Naive thymus-derived CD4-positive, alpha-beta T cell (primary cell): ENCODE measurements at regions of chr17 and their contacts with region 1.

Region 1: DNA sequence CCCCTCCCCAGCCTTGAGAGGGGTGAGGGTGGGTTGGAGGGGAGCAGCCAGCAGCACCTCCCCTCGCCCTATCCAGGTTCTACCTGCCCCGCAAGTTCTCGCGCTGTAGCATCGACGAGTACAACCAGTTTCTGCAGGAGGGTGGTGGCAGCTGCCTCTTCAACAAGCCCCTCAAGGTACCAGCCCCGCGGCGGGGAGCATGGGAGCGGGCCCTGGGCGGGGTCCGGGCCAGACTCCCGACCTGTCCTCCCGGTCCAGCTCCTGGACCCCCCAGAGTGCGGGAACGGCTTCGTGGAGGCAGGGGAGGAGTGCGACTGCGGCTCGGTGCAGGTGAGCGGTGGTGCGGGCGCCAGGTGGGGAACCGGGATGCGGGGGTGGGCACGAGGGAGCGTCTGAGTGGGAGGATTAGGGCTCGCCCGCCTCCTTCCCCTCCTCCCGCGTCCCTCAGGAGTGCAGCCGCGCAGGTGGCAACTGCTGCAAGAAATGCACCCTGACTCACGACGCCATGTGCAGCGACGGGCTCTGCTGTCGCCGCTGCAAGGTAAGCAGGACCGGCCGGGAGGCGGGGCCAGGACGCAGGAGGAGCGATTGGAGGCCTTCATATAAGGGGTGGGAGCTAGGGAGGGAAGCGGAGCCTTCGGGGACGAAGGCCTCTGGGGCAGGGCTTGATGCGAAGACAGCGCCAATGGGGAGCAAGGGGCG is 16.5 kb downstream of the ADAM11 start:
- DNase-seq: peak in 8 of 9 donors; percentile 83 to 95 (median 94)
- ATAC-seq: peak; percentile 96
- H3K4me3 ChIP-seq: peak overlapping the region; percentile 87
- H3K4me3 Mint-ChIP-seq: peak overlapping the region; percentile 88 to 93 (median 90)
- H3K27ac ChIP-seq: peak overlapping the region; percentile 76
- H3K27ac Mint-ChIP-seq: peak overlapping the region in 7 of 9 donors; percentile 58 to 80 (median 73)
- H3K4me1 ChIP-seq: peaks cover 0 to 11% of the 10 kb centered on the region in 2 donors
- H3K4me1 Mint-ChIP-seq: peaks cover 0 to 14% (median 9%) of the 10 kb centered on the region in 7 donors
- H3K27me3 ChIP-seq: no peaks in the 10 kb centered on the region
- H3K27me3 Mint-ChIP-seq: peaks cover 0 to 10% (median 5%) of the 10 kb centered on the region in 5 donors

Region 2: DNA sequence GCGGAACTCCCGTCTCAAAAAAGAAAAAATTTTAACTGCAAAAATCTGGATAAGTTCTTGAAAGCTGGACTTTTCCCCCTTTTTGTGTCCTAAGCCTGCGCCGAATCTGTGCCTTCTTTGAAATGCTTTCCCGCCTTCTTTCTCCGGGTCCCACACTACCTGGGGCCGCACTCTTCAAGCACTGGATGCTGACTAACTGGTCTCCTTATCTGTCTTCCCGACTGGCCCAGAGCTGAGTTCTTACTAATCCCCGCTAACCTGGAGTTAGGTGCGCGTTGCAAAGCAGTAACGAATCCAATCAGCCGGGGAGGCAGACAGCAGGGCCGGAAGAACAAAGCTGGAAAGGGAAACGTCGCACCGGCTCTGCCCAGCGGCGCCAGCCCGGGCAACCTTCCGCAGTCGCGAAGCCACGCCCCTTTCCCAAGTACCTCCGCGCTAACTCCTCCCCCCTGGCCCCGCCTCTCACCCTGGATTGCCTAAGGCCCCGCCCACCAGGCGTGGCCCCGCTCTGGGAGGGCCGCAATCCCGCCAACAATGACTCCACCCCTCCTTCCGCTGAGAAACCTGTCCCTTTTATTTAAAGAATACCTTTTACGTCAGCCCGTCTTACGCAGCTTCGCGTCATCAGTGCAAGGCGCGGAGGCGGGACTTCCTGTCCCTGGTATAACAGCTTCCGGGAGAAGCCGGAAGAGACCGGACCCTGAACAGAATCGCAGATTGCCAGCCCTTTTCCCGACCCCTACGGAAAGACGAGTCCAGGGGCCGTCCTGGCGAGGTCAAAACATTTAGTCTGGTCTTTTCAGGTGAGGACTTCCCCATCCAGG is 588.8 kb before region 1 on chr17 and contains the start of gene TMUB2:
- CTCF ChIA-PET with region 1: no interaction called
- POLR2A ChIA-PET with region 1: no interaction called
- intact Hi-C with region 1: loop called in 1 of 2 experiments (anchors 1 kb)
- DNase-seq: peak; percentile 99 to 100 (median 100)
- ATAC-seq: peak; percentile 99
- H3K4me3 ChIP-seq: peak within 1 kb of the TSS; percentile 100
- H3K4me3 Mint-ChIP-seq: peak within 1 kb of the TSS; percentile 94 to 100 (median 98)
- H3K27ac ChIP-seq: peak within 1 kb of the TSS; percentile 99
- H3K27ac Mint-ChIP-seq: peak within 1 kb of the TSS; percentile 97 to 100 (median 100)
- H3K4me1 ChIP-seq: peaks cover 23 to 35% of the 10 kb centered on the region in 2 donors
- H3K4me1 Mint-ChIP-seq: peaks cover 41 to 68% (median 51%) of the 10 kb centered on the region in 7 donors
- H3K27me3 ChIP-seq: no peaks in the 10 kb centered on the region
- H3K27me3 Mint-ChIP-seq: no peaks in the 10 kb centered on the region
- total RNA-seq, gene TMUB2: 34.9 to 56.0 (median 41.6) TPM

Region 3: DNA sequence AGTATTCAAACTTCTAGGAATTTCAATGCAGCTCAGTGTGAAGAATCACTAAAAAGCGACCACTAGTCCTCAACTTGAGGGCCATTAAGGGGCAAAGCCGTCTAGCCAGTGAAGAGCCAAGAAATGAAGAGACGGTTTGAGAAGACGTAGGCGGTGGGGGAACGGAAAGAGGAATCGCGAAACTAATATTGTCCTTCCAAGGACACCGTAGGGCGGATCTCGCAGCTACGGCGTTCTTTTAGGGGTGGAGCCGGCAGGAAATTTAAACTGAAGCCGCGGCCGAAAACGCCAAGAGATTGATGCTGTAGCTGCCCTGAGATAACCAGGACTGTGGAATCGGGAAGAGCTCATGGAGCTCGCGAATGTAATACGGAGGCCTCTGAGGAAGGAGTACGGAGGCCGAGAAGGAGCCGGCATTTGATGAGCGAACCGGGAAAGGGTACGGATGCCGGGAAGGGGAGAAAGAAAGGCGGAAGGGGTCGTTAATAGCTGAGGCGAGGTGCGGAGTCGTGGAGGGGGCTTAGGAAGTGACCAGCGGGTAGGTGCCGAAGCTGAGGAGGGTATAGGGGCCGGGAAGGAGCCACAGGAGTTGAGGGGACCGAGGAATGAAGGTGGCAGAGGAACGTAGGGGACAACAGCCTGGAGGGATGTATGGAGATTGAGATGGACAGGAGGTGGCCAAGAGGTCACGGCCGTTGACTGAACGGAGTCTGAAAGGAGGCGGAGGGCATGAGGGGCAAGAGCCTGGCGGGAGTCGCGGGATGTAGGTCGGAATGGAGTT is 66.7 kb before region 1 on chr17 and contains the start of gene DBF4B:
- CTCF ChIA-PET with region 1: interaction called, 6 read pairs
- POLR2A ChIA-PET with region 1: no interaction called
- intact Hi-C with region 1: loop called in 1 of 2 experiments (anchors 2 kb)
- DNase-seq: peak; percentile 49 to 92 (median 86)
- ATAC-seq: peak; percentile 99
- H3K4me3 ChIP-seq: peak within 1 kb of the TSS; percentile 91
- H3K4me3 Mint-ChIP-seq: peak within 1 kb of the TSS in 1 of 10 donors; percentile 79
- H3K27ac ChIP-seq: peak within 1 kb of the TSS; percentile 62
- H3K27ac Mint-ChIP-seq: peak within 1 kb of the TSS in 1 of 9 donors; percentile 72
- H3K4me1 ChIP-seq: peaks cover 14 to 15% of the 10 kb centered on the region in 2 donors
- H3K4me1 Mint-ChIP-seq: peaks cover 0 to 7% (median 4%) of the 10 kb centered on the region in 7 donors
- H3K27me3 ChIP-seq: no peaks in the 10 kb centered on the region
- H3K27me3 Mint-ChIP-seq: peaks cover 0 to 9% (median 4%) of the 10 kb centered on the region in 5 donors
- total RNA-seq, gene DBF4B: 2.8 to 23.1 (median 7.8) TPM

Region 4: DNA sequence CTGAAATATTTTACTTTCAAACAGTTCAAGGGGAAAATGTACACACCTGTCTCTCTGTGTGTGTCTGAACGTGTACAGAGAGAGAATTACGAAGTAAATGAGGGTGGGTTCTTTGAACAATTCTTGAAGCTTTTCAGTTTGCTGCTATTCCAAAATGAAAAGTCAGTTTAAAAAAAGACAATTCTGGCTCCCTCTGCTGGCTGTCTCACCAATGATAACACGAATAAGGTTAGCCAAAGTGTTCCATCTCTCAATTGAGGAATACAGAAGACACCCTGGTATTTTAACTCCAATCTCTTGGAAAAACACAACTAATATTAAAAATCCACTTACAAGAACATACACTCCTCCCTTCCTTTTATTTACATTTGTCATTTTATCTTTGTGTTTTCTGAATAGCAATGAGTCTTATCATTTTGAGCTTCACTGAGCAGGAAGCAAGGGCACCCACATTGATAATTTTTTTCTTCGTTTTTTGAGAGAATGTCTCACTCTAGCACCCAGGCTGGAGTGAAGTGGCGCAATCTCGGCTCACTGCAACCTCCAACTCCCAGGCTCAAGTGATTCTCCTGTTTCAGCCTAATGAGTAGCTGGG is 103.4 kb after region 1 on chr17:
- CTCF ChIA-PET with region 1: interaction called, 5 read pairs
- POLR2A ChIA-PET with region 1: no interaction called
- intact Hi-C with region 1: loop called in 1 of 2 experiments (anchors 1 kb)
- DNase-seq: peak in 4 of 9 donors; percentile 17 to 28 (median 25)
- ATAC-seq: no peak
- H3K4me3 ChIP-seq: no peak overlapping the region
- H3K4me3 Mint-ChIP-seq: no peak overlapping the region
- H3K27ac ChIP-seq: no peak overlapping the region
- H3K27ac Mint-ChIP-seq: peak overlapping the region in 1 of 9 donors; percentile 5
- H3K4me1 ChIP-seq: no peaks in the 10 kb centered on the region
- H3K4me1 Mint-ChIP-seq: peaks cover 0 to 8% (median 3%) of the 10 kb centered on the region in 7 donors
- H3K27me3 ChIP-seq: no peaks in the 10 kb centered on the region
- H3K27me3 Mint-ChIP-seq: no peaks in the 10 kb centered on the region

Region 5: GRCh38 chr17:44968226-44969143 is 193.2 kb after region 1 on chr17 and contains the start of gene C1QL1:
- CTCF ChIA-PET with region 1: no interaction called
- POLR2A ChIA-PET with region 1: no interaction called
- intact Hi-C with region 1: loop called in 1 of 2 experiments (anchors 2 kb)
- DNase-seq: peak; percentile 58 to 93 (median 69)
- ATAC-seq: peak; percentile 99
- H3K4me3 ChIP-seq: peak within 1 kb of the TSS; percentile 33
- H3K4me3 Mint-ChIP-seq: peak within 1 kb of the TSS; percentile 64 to 87 (median 78)
- H3K27ac ChIP-seq: no peak within 1 kb of the TSS
- H3K27ac Mint-ChIP-seq: peak within 1 kb of the TSS in 2 of 9 donors; percentile 16 to 55
- H3K4me1 ChIP-seq: peaks cover 19 to 24% of the 10 kb centered on the region in 2 donors
- H3K4me1 Mint-ChIP-seq: peaks cover 23 to 40% (median 29%) of the 10 kb centered on the region in 7 donors
- H3K27me3 ChIP-seq: peaks cover 14 to 21% of the 10 kb centered on the region in 2 donors
- H3K27me3 Mint-ChIP-seq: peaks cover 30 to 84% (median 45%) of the 10 kb centered on the region in 5 donors
- total RNA-seq, gene C1QL1: 0.29 TPM in 1 of 5 experiments, not detected in the others

Region 6: GRCh38 chr17:45060797-45061605 is 285.7 kb after region 1 on chr17 and contains the start of gene NMT1:
- CTCF ChIA-PET with region 1: no interaction called
- POLR2A ChIA-PET with region 1: no interaction called
- intact Hi-C with region 1: loop called in 1 of 2 experiments (anchors 1 kb)
- DNase-seq: peak; percentile 81 to 98 (median 98)
- ATAC-seq: peak; percentile 95
- H3K4me3 ChIP-seq: peak within 1 kb of the TSS; percentile 97
- H3K4me3 Mint-ChIP-seq: peak within 1 kb of the TSS; percentile 80 to 100 (median 98)
- H3K27ac ChIP-seq: peak within 1 kb of the TSS; percentile 87
- H3K27ac Mint-ChIP-seq: peak within 1 kb of the TSS; percentile 88 to 99 (median 97)
- H3K4me1 ChIP-seq: peaks cover 18 to 20% of the 10 kb centered on the region in 2 donors
- H3K4me1 Mint-ChIP-seq: peaks cover 26 to 66% (median 53%) of the 10 kb centered on the region in 7 donors
- H3K27me3 ChIP-seq: no peaks in the 10 kb centered on the region
- H3K27me3 Mint-ChIP-seq: no peaks in the 10 kb centered on the region
- total RNA-seq, gene NMT1: 59.5 to 136 (median 121) TPM

Region 7: DNA sequence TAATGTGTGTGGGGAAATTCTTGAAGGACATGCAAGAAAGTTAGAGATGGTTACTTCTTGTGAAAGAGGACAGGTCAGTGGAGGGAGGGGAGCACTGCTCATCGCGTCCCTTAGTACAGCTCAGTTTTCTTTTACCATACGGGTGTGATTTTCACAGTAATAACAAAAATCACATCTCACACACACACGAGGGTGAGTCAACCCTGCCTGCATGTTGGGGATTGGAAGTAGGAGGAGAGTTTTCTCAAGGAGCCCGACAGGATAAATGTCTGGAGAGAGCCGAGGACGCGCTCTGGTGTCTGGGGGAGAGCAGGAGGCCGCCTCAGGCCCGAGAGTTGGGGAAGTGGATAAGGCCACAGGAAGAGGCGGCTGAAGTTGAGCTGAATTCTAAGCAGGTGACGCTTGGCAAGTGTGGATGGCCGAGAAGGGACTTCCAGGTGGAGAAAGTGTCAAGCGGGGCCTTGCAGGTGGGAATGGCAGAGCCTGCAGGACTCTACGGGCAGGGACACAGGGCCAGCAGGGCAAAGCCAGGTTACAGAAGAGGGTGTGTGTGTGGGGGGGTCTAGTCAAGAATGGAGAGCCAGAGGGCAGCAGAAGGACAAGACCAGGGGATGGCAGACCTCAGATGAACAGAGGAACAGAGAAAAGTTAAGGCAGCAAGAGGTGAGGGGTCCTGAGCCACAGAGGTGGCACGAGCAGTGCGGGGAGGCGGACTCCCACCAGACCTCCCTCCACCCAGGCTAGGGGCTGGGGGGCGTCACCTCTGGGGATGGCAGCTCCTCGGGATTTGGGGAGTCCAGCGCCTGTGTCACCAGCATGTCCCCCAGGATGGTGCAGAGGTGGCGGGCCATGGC is 340.8 kb after region 1 on chr17:
- CTCF ChIA-PET with region 1: no interaction called
- POLR2A ChIA-PET with region 1: no interaction called
- intact Hi-C with region 1: no loop called
- DNase-seq: no peak
- ATAC-seq: no peak
- H3K4me3 ChIP-seq: no peak overlapping the region
- H3K4me3 Mint-ChIP-seq: no peak overlapping the region
- H3K27ac ChIP-seq: no peak overlapping the region
- H3K27ac Mint-ChIP-seq: peak overlapping the region in 1 of 9 donors; percentile 60
- H3K4me1 ChIP-seq: no peaks in the 10 kb centered on the region
- H3K4me1 Mint-ChIP-seq: no peaks in the 10 kb centered on the region
- H3K27me3 ChIP-seq: no peaks in the 10 kb centered on the region
- H3K27me3 Mint-ChIP-seq: no peaks in the 10 kb centered on the region

Region 8: DNA sequence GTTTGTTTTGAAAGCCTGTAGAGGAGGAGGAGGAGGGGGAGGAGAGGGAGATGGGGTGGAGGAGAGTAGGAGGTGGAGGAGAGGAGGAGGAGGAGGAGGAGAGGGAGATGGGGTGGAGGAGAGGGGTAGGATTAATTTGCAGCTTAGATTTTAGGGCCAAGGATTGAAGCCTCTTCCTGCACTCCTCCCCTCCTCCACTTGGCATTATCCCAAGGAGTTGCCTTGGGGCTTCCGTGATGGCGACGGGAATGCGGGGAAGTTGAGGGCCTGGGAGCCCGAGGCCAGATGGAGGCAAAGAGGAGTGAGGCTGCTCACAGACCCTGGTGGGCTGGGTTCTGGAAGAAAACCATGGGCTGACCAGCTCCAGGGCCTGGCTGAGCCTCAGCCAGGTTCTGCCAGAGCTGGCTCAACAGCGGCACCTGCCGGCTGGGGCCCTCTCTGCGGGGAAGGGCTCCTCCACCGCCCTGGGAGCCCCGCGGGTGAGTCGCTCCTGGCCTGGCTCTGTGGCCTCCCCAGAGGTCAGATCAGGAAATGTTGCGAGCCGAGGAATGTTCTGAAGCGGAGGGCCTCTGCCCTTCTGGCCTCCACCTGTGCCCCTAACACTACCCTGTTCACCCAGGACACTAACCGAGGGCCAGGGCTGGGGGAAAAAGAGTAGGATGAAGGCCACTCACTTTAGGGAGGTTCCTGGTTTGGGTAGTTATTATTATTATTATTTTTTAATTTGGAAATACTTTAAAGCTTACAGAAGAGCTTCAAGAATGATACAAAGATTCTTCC is 422.5 kb after region 1 on chr17:
- CTCF ChIA-PET with region 1: interaction called, 4 read pairs
- POLR2A ChIA-PET with region 1: no interaction called
- intact Hi-C with region 1: loop called in 1 of 2 experiments (anchors 5 kb)
- DNase-seq: peak; percentile 62 to 94 (median 79)
- ATAC-seq: peak; percentile 99
- H3K4me3 ChIP-seq: no peak overlapping the region
- H3K4me3 Mint-ChIP-seq: no peak overlapping the region
- H3K27ac ChIP-seq: no peak overlapping the region
- H3K27ac Mint-ChIP-seq: no peak overlapping the region
- H3K4me1 ChIP-seq: peaks cover 0 to 5% of the 10 kb centered on the region in 2 donors
- H3K4me1 Mint-ChIP-seq: peaks cover 0 to 9% (median 3%) of the 10 kb centered on the region in 7 donors
- H3K27me3 ChIP-seq: no peaks in the 10 kb centered on the region
- H3K27me3 Mint-ChIP-seq: no peaks in the 10 kb centered on the region